ENCODE measurements at regions of chr1 and their contacts with region 1.

Region 1: GRCh38 chr1:42816585-42817434 is at the starts of genes ERMAP and SVBP:
- DNase-seq: peak; percentile 95
- H3K4me3 ChIP-seq: peak within 1 kb of the TSS; percentile 66 to 82 (median 77)
- H3K27ac ChIP-seq: peak within 1 kb of the TSS; percentile 96 to 98 (median 98)
- H3K4me1 ChIP-seq: peaks cover 0 to 21% (median 14%) of the 10 kb centered on the region in 4 donors
- H3K27me3 ChIP-seq: no peaks in the 10 kb centered on the region
- CTCF ChIP-seq: no peak
- EP300 ChIP-seq: no peak
- POLR2A ChIP-seq: no peak
- total RNA-seq, gene ERMAP: 7.9 to 18.6 (median 11.9) TPM
- total RNA-seq, gene SVBP: 34.6 to 48.1 (median 40.6) TPM

Region 2: GRCh38 chr1:42618866-42619265 is 197.9 kb before region 1 on chr1:
- intact Hi-C with region 1: no loop called
- DNase-seq: no peak
- H3K4me3 ChIP-seq: no peak overlapping the region
- H3K27ac ChIP-seq: no peak overlapping the region
- H3K4me1 ChIP-seq: no peaks in the 10 kb centered on the region
- H3K27me3 ChIP-seq: no peaks in the 10 kb centered on the region
- CTCF ChIP-seq: no peak
- EP300 ChIP-seq: no peak
- POLR2A ChIP-seq: no peak

Region 3: DNA sequence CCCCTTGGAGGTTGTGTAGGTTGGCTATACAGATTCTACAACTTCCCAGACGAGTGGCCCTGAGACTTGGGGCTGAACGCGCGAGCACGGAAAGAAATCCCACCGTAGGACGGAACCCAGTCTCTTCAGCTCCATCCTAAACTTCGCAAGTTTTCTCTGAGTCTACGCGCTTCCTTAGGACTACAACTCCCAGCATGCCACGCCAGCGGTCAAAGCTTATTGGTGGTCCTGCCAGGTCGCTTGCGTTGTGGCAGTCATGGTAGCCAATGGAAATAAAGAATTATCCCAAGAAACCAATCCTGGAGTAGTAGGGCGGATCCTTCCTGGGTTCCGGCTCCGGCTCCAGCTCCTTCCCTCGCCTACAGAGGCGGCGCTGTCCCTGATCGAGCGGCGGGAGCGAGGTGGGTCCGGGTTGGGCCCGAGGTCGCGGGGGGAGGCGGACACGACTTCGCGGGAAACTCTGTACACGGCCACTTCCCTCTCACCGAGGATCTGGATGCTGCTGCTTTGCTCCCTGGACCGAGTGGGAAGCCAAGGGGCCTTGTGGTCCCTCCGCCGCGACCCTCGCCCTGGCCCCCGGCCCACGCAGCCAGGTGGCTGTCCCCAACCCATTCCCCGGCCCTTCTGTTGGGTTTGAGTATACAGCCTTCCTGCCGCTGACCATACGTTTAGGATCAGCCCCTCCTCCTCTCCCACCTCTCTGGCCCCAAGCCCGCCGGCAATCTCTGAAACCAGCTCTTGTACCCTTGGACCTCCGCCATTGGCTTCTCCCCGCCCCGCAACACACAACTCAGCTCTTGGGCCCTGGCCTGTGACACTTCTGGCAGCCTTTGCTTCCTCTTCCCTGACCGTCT is 29.7 kb after region 1 on chr1 and contains the start of gene ZNF691:
- intact Hi-C with region 1: loop called (anchors 1 kb)
- DNase-seq: peak; percentile 98
- H3K4me3 ChIP-seq: peak within 1 kb of the TSS; percentile 65 to 99 (median 90)
- H3K27ac ChIP-seq: peak within 1 kb of the TSS; percentile 85 to 90 (median 87)
- H3K4me1 ChIP-seq: peaks cover 0 to 23% (median 9%) of the 10 kb centered on the region in 4 donors
- H3K27me3 ChIP-seq: no peaks in the 10 kb centered on the region
- CTCF ChIP-seq: peak in 2 of 4 experiments; percentile 15 to 39
- EP300 ChIP-seq: no peak
- POLR2A ChIP-seq: peak; percentile 27 to 39
- total RNA-seq, gene ZNF691: 8.3 to 20.7 (median 15.2) TPM

Region 4: DNA sequence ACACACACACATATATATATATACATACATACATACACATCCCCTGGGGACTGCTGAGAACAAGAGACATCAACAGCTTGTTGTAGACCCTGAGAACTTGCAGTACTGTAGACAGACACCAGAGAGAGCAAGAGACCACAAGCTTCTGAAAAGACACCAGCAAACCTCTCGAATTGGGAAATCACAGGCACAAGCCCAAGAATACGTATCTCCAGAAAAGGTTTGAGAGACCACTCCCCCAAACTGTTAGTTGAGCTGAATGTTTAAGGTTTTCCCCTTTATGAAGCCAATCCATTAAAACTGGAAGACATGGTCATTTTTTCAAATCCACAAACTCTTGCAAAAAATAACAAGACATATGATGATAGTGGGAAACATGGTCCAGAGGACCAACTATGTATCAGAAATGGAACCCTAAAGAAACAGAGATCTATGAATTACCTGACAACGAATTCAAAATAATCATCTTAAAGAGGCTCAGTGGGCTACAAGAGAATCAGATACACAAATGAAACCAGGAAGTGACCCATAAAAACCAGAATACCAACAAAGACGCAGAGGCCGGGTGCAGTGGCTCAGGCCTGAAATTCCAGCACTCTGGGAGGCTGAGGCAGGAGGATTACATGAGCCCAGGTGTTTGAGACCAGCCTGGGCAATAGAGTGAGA is 96.7 kb after region 1 on chr1:
- intact Hi-C with region 1: no loop called
- DNase-seq: no peak
- H3K4me3 ChIP-seq: no peak overlapping the region
- H3K27ac ChIP-seq: no peak overlapping the region
- H3K4me1 ChIP-seq: no peaks in the 10 kb centered on the region
- H3K27me3 ChIP-seq: no peaks in the 10 kb centered on the region
- CTCF ChIP-seq: peak; percentile 74 to 95 (median 94)
- EP300 ChIP-seq: no peak
- POLR2A ChIP-seq: no peak

Region 5: GRCh38 chr1:43481491-43481890 is 664.7 kb after region 1 on chr1:
- intact Hi-C with region 1: no loop called
- DNase-seq: no peak
- H3K4me3 ChIP-seq: no peak overlapping the region
- H3K27ac ChIP-seq: no peak overlapping the region
- H3K4me1 ChIP-seq: no peaks in the 10 kb centered on the region
- H3K27me3 ChIP-seq: no peaks in the 10 kb centered on the region
- CTCF ChIP-seq: no peak
- EP300 ChIP-seq: no peak
- POLR2A ChIP-seq: no peak

Measured in sigmoid colon (tissue), 7 donors.